ENCODE measurements at regions of chr6 and their contacts with region 1.

Region 1: DNA sequence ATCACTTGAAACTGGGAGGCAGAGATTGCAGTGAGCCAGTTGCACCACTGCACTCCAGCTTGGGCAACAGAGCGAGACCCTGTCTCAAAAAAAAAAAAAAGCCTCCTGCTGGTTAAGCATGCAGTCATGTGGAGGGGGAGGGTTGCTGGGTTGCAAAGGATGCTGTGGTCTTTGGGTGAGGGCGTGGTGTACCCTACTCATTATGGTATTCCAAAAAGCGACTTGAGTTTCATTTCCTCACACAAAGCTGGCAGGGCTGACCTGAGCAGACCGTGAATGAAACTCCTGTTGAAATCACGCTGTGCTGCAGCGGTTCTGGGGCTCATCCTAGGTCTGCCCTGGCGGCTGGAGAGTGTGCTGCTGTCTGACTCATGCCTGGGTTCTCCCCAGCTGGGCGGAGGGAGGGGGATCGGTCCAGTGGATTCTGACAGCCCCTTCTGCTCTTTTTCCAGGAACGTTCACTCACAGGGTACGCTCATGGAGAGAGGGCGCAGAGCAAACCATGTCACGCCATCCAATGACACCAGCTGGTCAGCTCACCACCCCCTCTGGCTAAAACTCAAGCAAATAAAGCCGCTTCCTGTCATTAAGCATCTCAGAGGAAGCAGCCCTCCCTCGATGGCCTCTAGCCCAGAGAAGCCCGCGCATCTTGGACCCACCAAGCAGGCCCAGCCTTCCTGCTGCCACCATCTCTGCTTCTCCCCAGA is 166.2 kb downstream of the SCML4 start:
- DNase-seq: peak; percentile 72
- ATAC-seq: peak; percentile 89
- H3K4me3 Mint-ChIP-seq: peak overlapping the region; percentile 87
- H3K27ac Mint-ChIP-seq: peak overlapping the region; percentile 96
- H3K4me1 Mint-ChIP-seq: peaks cover 52% of the 10 kb centered on the region
- H3K27me3 Mint-ChIP-seq: peaks cover 2% of the 10 kb centered on the region

Region 2: GRCh38 chr6:106670236-106670635 is 987.7 kb before region 1 on chr6:
- POLR2A ChIA-PET with region 1: no interaction called
- DNase-seq: no peak
- ATAC-seq: no peak
- H3K4me3 Mint-ChIP-seq: no peak overlapping the region
- H3K27ac Mint-ChIP-seq: no peak overlapping the region
- H3K4me1 Mint-ChIP-seq: no peaks in the 10 kb centered on the region
- H3K27me3 Mint-ChIP-seq: no peaks in the 10 kb centered on the region

Region 3: DNA sequence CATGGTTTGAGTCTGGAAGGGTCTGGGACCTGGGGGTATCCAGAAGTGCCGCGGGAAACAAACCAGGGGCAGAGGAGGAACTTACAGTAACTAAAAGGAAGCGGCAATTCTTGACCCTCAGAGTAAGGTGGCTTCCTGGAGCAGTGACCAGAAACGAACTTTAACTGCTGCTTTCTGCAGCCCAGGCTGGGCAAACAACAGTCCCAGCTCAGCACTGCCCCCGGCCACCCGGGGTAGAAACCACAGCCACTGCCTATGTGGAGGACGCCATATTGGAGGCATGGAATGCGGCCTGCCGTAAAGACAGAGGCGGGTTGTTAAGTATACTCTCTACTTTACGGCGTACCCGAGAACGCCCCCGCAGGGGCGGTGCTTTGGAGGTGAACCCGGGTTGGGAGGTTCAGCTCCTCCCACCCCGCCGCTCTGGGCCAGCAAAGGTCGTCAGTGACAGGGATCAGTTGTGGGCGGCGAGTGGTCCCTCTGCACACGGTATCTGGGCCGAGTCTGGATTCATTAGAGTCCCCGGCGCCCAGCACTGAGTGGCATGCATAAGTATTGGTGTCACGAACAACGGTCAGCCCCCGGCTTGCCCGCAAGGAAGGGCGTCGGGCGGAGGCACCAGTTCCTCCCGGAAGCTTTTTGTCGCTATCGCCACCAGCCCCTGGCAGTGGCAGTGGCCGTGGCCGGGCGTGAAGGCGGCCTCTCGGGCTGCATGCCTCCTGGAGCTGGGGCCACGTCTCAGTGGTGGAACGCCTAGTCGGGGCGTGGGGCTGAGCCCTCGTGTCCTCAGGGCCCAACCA is 198.4 kb before region 1 on chr6 and contains the start of gene PDSS2:
- POLR2A ChIA-PET with region 1: interaction called, 53 read pairs
- DNase-seq: peak; percentile 94
- ATAC-seq: peak; percentile 94
- H3K4me3 Mint-ChIP-seq: peak within 1 kb of the TSS; percentile 93
- H3K27ac Mint-ChIP-seq: peak within 1 kb of the TSS; percentile 97
- H3K4me1 Mint-ChIP-seq: peaks cover 19% of the 10 kb centered on the region
- H3K27me3 Mint-ChIP-seq: no peaks in the 10 kb centered on the region
- total RNA-seq, gene PDSS2: 12.8 to 15.4 TPM

Region 4: GRCh38 chr6:107618672-107619071 is 39.2 kb before region 1 on chr6:
- POLR2A ChIA-PET with region 1: interaction called, 29 read pairs
- DNase-seq: peak; percentile 67
- ATAC-seq: peak; percentile 99
- H3K4me3 Mint-ChIP-seq: peak overlapping the region; percentile 48
- H3K27ac Mint-ChIP-seq: peak overlapping the region; percentile 91
- H3K4me1 Mint-ChIP-seq: peaks cover 36% of the 10 kb centered on the region
- H3K27me3 Mint-ChIP-seq: peaks cover 3% of the 10 kb centered on the region

Region 5: GRCh38 chr6:107634324-107635056 is 23.4 kb before region 1 on chr6:
- POLR2A ChIA-PET with region 1: interaction called, 10 read pairs
- DNase-seq: peak; percentile 58
- ATAC-seq: peak; percentile 74
- H3K4me3 Mint-ChIP-seq: peak overlapping the region; percentile 66
- H3K27ac Mint-ChIP-seq: no peak overlapping the region
- H3K4me1 Mint-ChIP-seq: peaks cover 13% of the 10 kb centered on the region
- H3K27me3 Mint-ChIP-seq: peaks cover 60% of the 10 kb centered on the region

Region 6: GRCh38 chr6:107820338-107821261 is 162.7 kb after region 1 on chr6:
- POLR2A ChIA-PET with region 1: interaction called, 12 read pairs
- DNase-seq: peak; percentile 48
- ATAC-seq: peak; percentile 13
- H3K4me3 Mint-ChIP-seq: peak overlapping the region; percentile 81
- H3K27ac Mint-ChIP-seq: peak overlapping the region; percentile 92
- H3K4me1 Mint-ChIP-seq: peaks cover 73% of the 10 kb centered on the region
- H3K27me3 Mint-ChIP-seq: no peaks in the 10 kb centered on the region

Measured in activated naive CD8-positive, alpha-beta T cell treated with anti-CD3 and anti-CD28 coated beads, Interleukin-2, amount 10 ng/mL, durations not matched to agents 7 days and 5 days (primary cell).